MCF 10A (cell line): ENCODE measurements at regions of chr9 and their contacts with region 1.

Region 1: DNA sequence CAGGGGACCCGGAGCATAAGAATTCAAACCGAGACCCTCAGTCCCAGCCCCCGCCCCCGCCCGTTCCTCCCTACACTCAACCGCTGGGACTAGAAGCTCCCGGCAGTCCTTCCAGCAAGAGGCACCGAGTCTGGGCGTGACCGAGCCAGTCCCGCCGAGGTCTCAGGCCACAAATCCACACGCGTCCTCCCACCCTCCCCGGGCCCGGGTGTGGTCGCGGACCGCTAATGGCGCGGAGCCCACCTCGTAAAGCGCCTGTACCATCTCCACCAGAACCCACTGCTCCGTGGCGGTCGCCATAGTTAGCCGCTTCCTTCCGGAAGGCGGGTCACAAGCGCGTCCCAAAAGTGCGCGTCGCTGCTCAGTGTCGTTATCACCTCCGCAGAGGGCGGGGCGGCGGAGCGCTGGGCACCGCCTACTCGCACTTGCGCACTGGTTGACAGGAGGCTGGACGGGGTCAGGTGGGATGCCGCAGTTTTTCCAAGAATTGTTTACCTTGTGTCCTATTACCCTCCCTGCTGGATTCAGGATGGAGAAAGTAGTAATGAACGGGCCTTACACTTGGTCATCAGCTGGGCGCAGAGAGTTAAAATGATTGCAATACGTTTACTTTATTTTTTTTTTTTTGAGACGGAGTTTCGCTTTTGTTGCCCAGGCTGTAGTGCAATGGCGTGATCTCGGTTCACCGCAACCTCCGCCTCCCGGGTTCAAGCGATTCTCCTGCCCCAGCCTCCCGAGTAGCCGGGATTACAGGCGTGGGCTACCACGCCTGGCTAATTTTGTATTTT is at the start of gene SPTLC1:
- DNase-seq: peak; percentile 92
- H3K4me3 Mint-ChIP-seq: peak within 1 kb of the TSS; percentile 95
- H3K27ac Mint-ChIP-seq: peak within 1 kb of the TSS; percentile 99
- H3K4me1 Mint-ChIP-seq: peaks cover 15% of the 10 kb centered on the region
- H3K27me3 Mint-ChIP-seq: no peaks in the 10 kb centered on the region
- CTCF ChIP-seq: no peak
- total RNA-seq, gene SPTLC1: 65.5 and 68.0 TPM in 2 replicates

Region 2: DNA sequence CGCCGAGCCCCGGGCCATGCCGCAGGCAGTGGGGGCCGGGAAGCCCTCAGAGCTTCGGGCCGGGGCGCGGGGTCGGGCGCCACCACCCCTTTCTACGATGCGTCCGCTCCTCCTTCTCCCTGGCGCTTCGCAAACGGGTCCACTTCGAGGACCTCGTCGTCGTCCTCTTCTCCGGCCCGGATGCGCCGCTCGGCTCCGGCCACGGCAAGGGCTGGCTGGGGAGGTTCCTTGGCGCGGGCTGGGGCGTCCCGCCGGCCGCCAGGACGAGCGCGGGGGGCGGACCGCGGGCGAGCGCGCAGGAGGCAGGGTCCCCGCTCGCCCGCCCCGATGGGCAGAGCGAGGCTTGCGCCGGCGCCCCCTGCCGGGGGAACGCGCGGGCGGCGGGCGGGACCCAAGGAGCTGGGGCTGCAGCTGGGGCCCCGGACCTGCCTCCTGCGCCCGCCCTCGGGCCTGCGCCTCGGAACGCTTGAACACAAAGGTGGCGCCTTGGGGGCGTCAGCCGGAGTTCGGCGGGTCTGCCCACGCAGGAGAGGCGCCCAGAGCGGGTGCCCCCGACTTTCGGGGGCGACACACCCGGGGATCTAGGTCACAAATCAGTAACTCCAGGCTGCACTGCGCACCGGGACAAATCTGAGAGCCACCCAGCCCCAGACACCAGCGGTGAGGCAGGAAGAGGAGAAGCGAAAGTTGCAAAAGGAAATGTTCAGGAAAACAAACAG is 165.2 kb before region 1 on chr9 and contains the start of gene ROR2:
- CTCF ChIA-PET with region 1: no interaction called
- POLR2A ChIA-PET with region 1: interaction called, 4 read pairs
- intact Hi-C with region 1: loop called (anchors 10 kb)
- DNase-seq: no peak
- H3K4me3 Mint-ChIP-seq: peak within 1 kb of the TSS; percentile 62
- H3K27ac Mint-ChIP-seq: no peak within 1 kb of the TSS
- H3K4me1 Mint-ChIP-seq: peaks cover 8% of the 10 kb centered on the region
- H3K27me3 Mint-ChIP-seq: peaks cover 29% of the 10 kb centered on the region
- CTCF ChIP-seq: peak; percentile 44
- total RNA-seq, gene ROR2: 0.10 and 0.84 TPM in 2 replicates